ENCODE measurements at regions of chr3 and their contacts with region 1.

Region 1: GRCh38 chr3:194472290-194472920 is 14.4 kb downstream of the ATP13A3 start:
- DNase-seq: peak; percentile 25 to 68
- ATAC-seq: peak; percentile 87; a peak in 5 of 6 replicates
- H3K4me3 ChIP-seq: no peak overlapping the region
- H3K27ac ChIP-seq: no peak overlapping the region
- H3K4me1 ChIP-seq: peaks cover 55% of the 10 kb centered on the region
- CTCF ChIP-seq: peak; percentile 89
- EP300 ChIP-seq: no peak
- POLR2A ChIP-seq: no peak
- RAD21 ChIP-seq: peak; percentile 86 to 93

Region 2: GRCh38 chr3:194364652-194365434 is 107.6 kb before region 1 on chr3:
- CTCF ChIA-PET with region 1: no interaction called
- POLR2A ChIA-PET with region 1: no interaction called
- DNase-seq: no peak
- ATAC-seq: peak in 1 of 2 experiments; percentile 20; a peak in 1 of 6 replicates
- H3K4me3 ChIP-seq: no peak overlapping the region
- H3K27ac ChIP-seq: peak overlapping the region in 1 of 2 experiments; percentile 28; a peak in 1 of 6 replicates
- H3K4me1 ChIP-seq: peaks cover 6% of the 10 kb centered on the region; the same call in 1 of the 3 replicates
- CTCF ChIP-seq: no peak
- EP300 ChIP-seq: no peak
- POLR2A ChIP-seq: no peak
- RAD21 ChIP-seq: no peak

Region 3: DNA sequence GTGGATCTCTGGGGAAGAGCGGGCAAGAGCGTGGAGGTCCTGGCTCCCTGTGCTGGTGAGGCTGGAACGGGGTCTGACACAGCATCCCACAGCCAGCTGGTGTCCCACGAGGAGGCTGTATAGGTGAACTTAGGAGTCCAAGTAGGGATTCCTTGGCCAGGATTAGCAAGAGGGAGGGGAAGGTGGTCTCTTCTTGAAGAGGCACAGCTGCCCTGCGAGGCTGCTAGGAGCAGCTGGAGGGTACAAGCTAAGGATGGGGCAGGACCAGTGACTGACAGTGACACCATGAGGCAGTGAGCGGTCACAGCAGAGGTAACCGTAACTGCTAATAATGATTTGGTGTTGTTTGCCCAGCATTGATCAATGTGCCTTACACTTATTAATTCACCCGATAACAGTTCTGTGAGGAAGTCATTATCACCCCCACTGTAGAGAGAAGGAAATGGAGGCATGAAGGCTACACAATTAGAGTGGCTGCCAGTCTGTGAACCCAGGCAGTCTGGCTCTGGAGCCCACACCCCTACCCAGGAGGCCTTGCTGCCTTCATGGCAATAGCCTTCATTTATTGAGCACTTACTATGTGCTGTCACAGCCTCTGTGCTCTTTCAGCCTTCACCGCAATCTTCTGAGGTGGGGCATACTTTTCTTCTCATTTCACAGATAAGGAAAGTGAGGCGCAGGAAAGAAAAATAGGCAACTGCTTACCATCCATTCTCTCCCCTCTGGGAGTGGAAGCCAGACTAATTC is 101.5 kb after region 1 on chr3:
- CTCF ChIA-PET with region 1: interaction called, 11 read pairs
- POLR2A ChIA-PET with region 1: no interaction called
- DNase-seq: peak; percentile 31 to 39
- ATAC-seq: peak; percentile 47 to 63; a peak in 4 of 6 replicates
- H3K4me3 ChIP-seq: no peak overlapping the region
- H3K27ac ChIP-seq: peak overlapping the region; percentile 60 to 83; a peak in 4 of 6 replicates
- H3K4me1 ChIP-seq: peaks cover 57% of the 10 kb centered on the region
- CTCF ChIP-seq: peak; percentile 38; the same call in 2 of the 3 replicates
- EP300 ChIP-seq: no peak
- POLR2A ChIP-seq: no peak
- RAD21 ChIP-seq: peak; percentile 47 to 64; a peak in 4 of 5 replicates

Region 4: GRCh38 chr3:194583604-194584318 is 111.4 kb after region 1 on chr3:
- CTCF ChIA-PET with region 1: interaction called, 13 read pairs
- POLR2A ChIA-PET with region 1: interaction called, 3 read pairs
- DNase-seq: peak; percentile 88 to 91
- ATAC-seq: peak; percentile 87 to 94
- H3K4me3 ChIP-seq: peak overlapping the region; percentile 67
- H3K27ac ChIP-seq: peak overlapping the region; percentile 88 to 98
- H3K4me1 ChIP-seq: peaks cover 15% of the 10 kb centered on the region
- CTCF ChIP-seq: no peak
- EP300 ChIP-seq: no peak
- POLR2A ChIP-seq: peak; percentile 86
- RAD21 ChIP-seq: 0 out of 5 replicates have a peak, but pooled peaks of 1 of the 2 experiments have one; percentile 13

Region 5: DNA sequence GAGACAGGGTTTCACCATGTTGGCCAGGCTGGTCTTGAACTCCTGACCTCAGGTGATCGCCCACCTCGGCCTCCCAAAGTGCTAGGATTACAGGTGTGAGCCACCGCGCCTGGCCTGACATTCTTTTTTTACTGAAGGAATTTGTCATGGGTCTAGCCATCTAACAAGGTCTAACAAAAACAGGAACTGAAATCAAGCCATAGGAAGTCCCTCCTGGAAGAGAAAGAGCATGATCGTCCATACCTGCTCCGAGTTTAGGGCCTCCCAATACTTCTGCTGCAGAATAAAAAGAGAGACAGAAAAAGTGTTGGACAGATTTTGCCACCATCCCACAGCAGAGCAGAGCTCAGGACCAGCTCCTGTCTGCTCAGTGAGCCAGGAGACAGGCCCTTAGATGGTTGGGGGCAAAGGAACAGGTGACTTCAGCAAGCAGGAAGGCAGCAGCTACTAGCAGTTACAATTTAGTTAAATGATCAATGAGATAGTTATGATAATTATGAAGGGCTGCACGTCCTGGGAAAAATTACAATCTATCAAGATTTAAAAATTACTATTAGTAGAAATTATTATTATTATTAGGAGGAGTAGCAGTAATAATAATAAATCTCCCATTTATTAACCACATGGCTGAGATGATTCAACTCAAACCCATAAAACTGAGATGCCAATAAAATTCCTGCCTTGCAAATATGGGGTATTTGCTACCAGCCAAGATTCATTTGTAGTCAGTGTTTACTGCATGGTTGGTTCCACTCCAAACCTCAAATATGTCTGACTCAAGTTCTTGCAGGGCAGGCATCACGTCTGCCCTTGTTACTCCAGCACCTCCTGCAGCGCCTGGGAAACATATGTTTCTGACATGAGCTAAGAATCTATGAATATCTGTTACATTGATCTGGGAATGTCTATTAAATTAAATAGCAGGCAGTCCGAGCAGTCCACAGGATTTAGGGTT is 120.7 kb after region 1 on chr3:
- CTCF ChIA-PET with region 1: interaction called, 60 read pairs
- POLR2A ChIA-PET with region 1: interaction called, 3 read pairs
- DNase-seq: peak; percentile 76 to 91
- ATAC-seq: peak; percentile 85
- H3K4me3 ChIP-seq: no peak overlapping the region
- H3K27ac ChIP-seq: peak overlapping the region; percentile 91 to 96
- H3K4me1 ChIP-seq: peaks cover 42% of the 10 kb centered on the region
- CTCF ChIP-seq: no peak
- EP300 ChIP-seq: peak; percentile 90 to 91; a peak in 4 of 5 replicates
- POLR2A ChIP-seq: no peak
- RAD21 ChIP-seq: peak; percentile 7 to 33; a peak in 3 of 5 replicates

Region 6: GRCh38 chr3:194824701-194825111 is 352.3 kb after region 1 on chr3:
- CTCF ChIA-PET with region 1: no interaction called
- POLR2A ChIA-PET with region 1: no interaction called
- DNase-seq: no peak
- ATAC-seq: no peak
- H3K4me3 ChIP-seq: no peak overlapping the region
- H3K27ac ChIP-seq: no peak overlapping the region
- H3K4me1 ChIP-seq: no peaks in the 10 kb centered on the region
- CTCF ChIP-seq: no peak
- EP300 ChIP-seq: no peak
- POLR2A ChIP-seq: no peak
- RAD21 ChIP-seq: no peak